Gastrocnemius medialis (tissue), 4 donors: ENCODE measurements at regions of chr11 and their contacts with region 1.

Region 1: GRCh38 chr11:130827451-130828377 is 88.6 kb downstream of the SNX19 start:
- DNase-seq: peak; percentile 20 to 53
- ATAC-seq: peak; percentile 36 to 72
- H3K4me3 ChIP-seq: no peak overlapping the region
- H3K27ac ChIP-seq: peak overlapping the region in 1 of 4 donors; percentile 61
- H3K4me1 ChIP-seq: peaks cover 42 to 47% of the 10 kb centered on the region in 2 donors
- H3K27me3 ChIP-seq: no peaks in the 10 kb centered on the region
- CTCF ChIP-seq: peak in 2 of 5 experiments; percentile 20 to 37
- POLR2A ChIP-seq: no peak

Region 2: DNA sequence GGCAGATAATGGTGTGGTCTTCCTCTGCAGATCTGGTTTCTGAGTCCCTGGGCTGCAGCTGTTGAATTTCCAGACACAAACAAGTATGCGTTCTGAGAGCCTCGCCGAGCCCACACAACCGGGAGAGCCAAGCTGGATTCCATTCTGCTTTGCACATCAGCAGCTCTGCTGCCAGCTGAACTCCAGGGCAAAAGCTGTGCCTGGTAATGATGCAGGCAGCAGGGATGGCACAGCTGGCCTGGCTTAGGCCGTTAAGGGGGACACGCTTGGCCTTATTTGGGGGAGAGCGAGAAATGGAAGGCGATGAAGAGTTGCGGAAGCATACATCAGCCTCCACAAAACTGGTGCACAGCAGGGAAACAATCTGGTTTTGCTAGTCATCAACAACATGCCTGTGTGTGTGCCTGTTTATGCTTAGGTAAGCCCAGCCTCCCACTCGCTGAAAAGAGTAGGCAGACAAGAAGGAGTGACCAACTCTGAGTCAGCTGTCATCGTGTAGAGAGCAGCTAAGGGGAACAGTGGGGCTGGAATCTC is 424.4 kb before region 1 on chr11:
- in situ Hi-C with region 1: no loop called
- intact Hi-C with region 1: no loop called
- DNase-seq: no peak
- ATAC-seq: peak; percentile 23 to 61
- H3K4me3 ChIP-seq: no peak overlapping the region
- H3K27ac ChIP-seq: no peak overlapping the region
- H3K4me1 ChIP-seq: peaks cover 22 to 31% of the 10 kb centered on the region in 2 donors
- H3K27me3 ChIP-seq: no peaks in the 10 kb centered on the region
- CTCF ChIP-seq: no peak
- POLR2A ChIP-seq: no peak

Region 3: GRCh38 chr11:130677486-130678153 is 150.1 kb before region 1 on chr11:
- in situ Hi-C with region 1: no loop called
- intact Hi-C with region 1: loop called (anchors 5 kb)
- DNase-seq: no peak
- ATAC-seq: no peak
- H3K4me3 ChIP-seq: no peak overlapping the region
- H3K27ac ChIP-seq: no peak overlapping the region
- H3K4me1 ChIP-seq: peaks cover 30 to 44% of the 10 kb centered on the region in 2 donors
- H3K27me3 ChIP-seq: no peaks in the 10 kb centered on the region
- CTCF ChIP-seq: no peak
- POLR2A ChIP-seq: no peak